Activated B cell treated with CpG ODN at 0.5 μM for 24 hours (primary cell): ENCODE measurements at regions of chr16 and their contacts with region 1.

Region 1: GRCh38 chr16:12067714-12068401 is 91.3 kb downstream of the SNX29 start:
- DNase-seq: no peak
- ATAC-seq: peak; percentile 87
- H3K4me3 Mint-ChIP-seq: no peak overlapping the region
- H3K27ac Mint-ChIP-seq: peak overlapping the region; percentile 50
- H3K4me1 Mint-ChIP-seq: peaks cover 17% of the 10 kb centered on the region
- H3K27me3 Mint-ChIP-seq: no peaks in the 10 kb centered on the region
- CTCF ChIP-seq: peak; percentile 78

Region 2: GRCh38 chr16:11871193-11871592 is 196.7 kb before region 1 on chr16:
- CTCF ChIA-PET with region 1: interaction called, 4 read pairs
- POLR2A ChIA-PET with region 1: no interaction called
- intact Hi-C with region 1: loop called (anchors 5 kb)
- DNase-seq: no peak
- ATAC-seq: no peak
- H3K4me3 Mint-ChIP-seq: no peak overlapping the region
- H3K27ac Mint-ChIP-seq: no peak overlapping the region
- H3K4me1 Mint-ChIP-seq: no peaks in the 10 kb centered on the region
- H3K27me3 Mint-ChIP-seq: no peaks in the 10 kb centered on the region
- CTCF ChIP-seq: no peak

Region 3: DNA sequence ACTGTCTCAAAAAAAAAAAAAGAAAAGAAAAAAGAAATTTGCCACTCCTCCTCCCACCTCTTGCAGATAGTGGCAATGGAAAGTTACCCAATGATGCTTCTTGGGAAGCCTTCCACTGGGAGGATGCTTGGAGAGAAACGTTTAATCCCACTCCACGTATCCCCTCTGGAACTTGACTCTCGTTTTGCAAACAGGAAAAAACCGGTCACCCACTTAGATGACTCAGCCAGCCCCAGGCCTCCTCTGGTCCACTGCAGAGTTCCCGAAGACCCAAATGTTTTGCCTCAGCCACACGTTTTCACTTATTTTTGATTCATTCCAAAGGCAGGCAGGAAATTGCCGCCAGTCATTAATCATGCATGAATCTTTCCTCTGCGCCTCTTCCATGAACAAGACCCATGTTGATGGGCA is 112.1 kb before region 1 on chr16:
- CTCF ChIA-PET with region 1: interaction called, 20 read pairs
- POLR2A ChIA-PET with region 1: no interaction called
- intact Hi-C with region 1: no loop called
- DNase-seq: no peak
- ATAC-seq: no peak
- H3K4me3 Mint-ChIP-seq: no peak overlapping the region
- H3K27ac Mint-ChIP-seq: no peak overlapping the region
- H3K4me1 Mint-ChIP-seq: peaks cover 22% of the 10 kb centered on the region
- H3K27me3 Mint-ChIP-seq: no peaks in the 10 kb centered on the region
- CTCF ChIP-seq: no peak

Region 4: GRCh38 chr16:11977376-11978041 is 90.3 kb before region 1 on chr16:
- CTCF ChIA-PET with region 1: interaction called, 20 read pairs
- POLR2A ChIA-PET with region 1: interaction called, 4 read pairs
- intact Hi-C with region 1: no loop called
- DNase-seq: no peak
- ATAC-seq: no peak
- H3K4me3 Mint-ChIP-seq: peak overlapping the region; percentile 96
- H3K27ac Mint-ChIP-seq: peak overlapping the region; percentile 77
- H3K4me1 Mint-ChIP-seq: peaks cover 65% of the 10 kb centered on the region
- H3K27me3 Mint-ChIP-seq: no peaks in the 10 kb centered on the region
- CTCF ChIP-seq: no peak

Region 5: DNA sequence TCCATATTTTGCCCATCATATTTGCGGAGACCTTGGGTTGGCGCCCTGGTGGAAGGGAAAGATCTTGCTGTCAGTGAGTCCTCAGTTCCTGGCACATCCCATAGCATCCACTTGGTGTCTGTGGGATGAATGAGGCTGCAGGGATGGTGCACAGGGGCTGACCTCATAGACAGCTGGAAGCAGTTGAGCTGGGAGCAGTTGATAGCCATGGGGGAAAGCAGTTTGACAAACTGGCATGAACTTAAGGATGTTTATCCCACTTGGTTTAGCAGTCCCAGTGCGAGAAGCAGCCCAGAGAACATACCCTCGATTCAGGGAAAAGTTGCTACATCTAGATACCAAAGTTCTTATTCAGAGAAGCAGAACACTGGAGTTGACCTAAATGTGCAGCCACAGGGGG is 10.6 kb before region 1 on chr16:
- CTCF ChIA-PET with region 1: interaction called, 14 read pairs
- POLR2A ChIA-PET with region 1: no interaction called
- intact Hi-C with region 1: no loop called
- DNase-seq: no peak
- ATAC-seq: no peak
- H3K4me3 Mint-ChIP-seq: no peak overlapping the region
- H3K27ac Mint-ChIP-seq: no peak overlapping the region
- H3K4me1 Mint-ChIP-seq: peaks cover 38% of the 10 kb centered on the region
- H3K27me3 Mint-ChIP-seq: no peaks in the 10 kb centered on the region
- CTCF ChIP-seq: no peak

Region 6: GRCh38 chr16:12089492-12090150 is 21.8 kb after region 1 on chr16:
- CTCF ChIA-PET with region 1: interaction called, 11 read pairs
- POLR2A ChIA-PET with region 1: no interaction called
- intact Hi-C with region 1: loop called (anchors 2 kb)
- DNase-seq: peak; percentile 37
- ATAC-seq: peak; percentile 98
- H3K4me3 Mint-ChIP-seq: peak overlapping the region; percentile 74
- H3K27ac Mint-ChIP-seq: peak overlapping the region; percentile 81
- H3K4me1 Mint-ChIP-seq: peaks cover 38% of the 10 kb centered on the region
- H3K27me3 Mint-ChIP-seq: no peaks in the 10 kb centered on the region
- CTCF ChIP-seq: no peak

Region 7: GRCh38 chr16:12170091-12171040 is 102.5 kb after region 1 on chr16:
- CTCF ChIA-PET with region 1: no interaction called
- POLR2A ChIA-PET with region 1: no interaction called
- intact Hi-C with region 1: no loop called
- DNase-seq: no peak
- ATAC-seq: no peak
- H3K4me3 Mint-ChIP-seq: no peak overlapping the region
- H3K27ac Mint-ChIP-seq: no peak overlapping the region
- H3K4me1 Mint-ChIP-seq: no peaks in the 10 kb centered on the region
- H3K27me3 Mint-ChIP-seq: no peaks in the 10 kb centered on the region
- CTCF ChIP-seq: no peak

Region 8: GRCh38 chr16:12257926-12258561 is 190.2 kb after region 1 on chr16:
- CTCF ChIA-PET with region 1: no interaction called
- POLR2A ChIA-PET with region 1: no interaction called
- intact Hi-C with region 1: no loop called
- DNase-seq: no peak
- ATAC-seq: no peak
- H3K4me3 Mint-ChIP-seq: no peak overlapping the region
- H3K27ac Mint-ChIP-seq: no peak overlapping the region
- H3K4me1 Mint-ChIP-seq: peaks cover 29% of the 10 kb centered on the region
- H3K27me3 Mint-ChIP-seq: no peaks in the 10 kb centered on the region
- CTCF ChIP-seq: no peak